ENCODE measurements at regions of chr22 and their contacts with region 1.

Region 1: GRCh38 chr22:33952776-33953175 is 32.5 kb upstream of the LARGE1 start:
- DNase-seq: no peak
- CTCF ChIP-seq: no peak

Region 2: GRCh38 chr22:34019190-34019845 is 66.5 kb after region 1 on chr22:
- CTCF ChIA-PET with region 1: no interaction called
- POLR2A ChIA-PET with region 1: interaction called, 10 read pairs
- DNase-seq: no peak
- CTCF ChIP-seq: no peak